ENCODE measurements at regions of chr15 and their contacts with region 1.

Region 1: GRCh38 chr15:26051761-26052675 is 188.9 kb upstream of the ATP10A start:
- DNase-seq: peak in 4 of 5 donors; percentile 11 to 55 (median 32)
- ATAC-seq: peak in 3 of 4 donors; percentile 66 to 89 (median 67)
- H3K4me3 ChIP-seq: no peak overlapping the region
- H3K27ac ChIP-seq: no peak overlapping the region
- H3K4me1 ChIP-seq: no peaks in the 10 kb centered on the region
- H3K27me3 ChIP-seq: peaks cover 0 to 3% (median 0%) of the 10 kb centered on the region in 9 donors
- CTCF ChIP-seq: no peak
- POLR2A ChIP-seq: no peak

Region 2: GRCh38 chr15:25989327-25989726 is 62.7 kb before region 1 on chr15:
- intact Hi-C with region 1: loop called in 1 of 10 experiments (anchors 10 kb)
- DNase-seq: no peak
- ATAC-seq: no peak
- H3K4me3 ChIP-seq: no peak overlapping the region
- H3K27ac ChIP-seq: no peak overlapping the region
- H3K4me1 ChIP-seq: no peaks in the 10 kb centered on the region
- H3K27me3 ChIP-seq: peaks cover 0 to 4% (median 0%) of the 10 kb centered on the region in 9 donors
- CTCF ChIP-seq: no peak
- POLR2A ChIP-seq: no peak

Region 3: DNA sequence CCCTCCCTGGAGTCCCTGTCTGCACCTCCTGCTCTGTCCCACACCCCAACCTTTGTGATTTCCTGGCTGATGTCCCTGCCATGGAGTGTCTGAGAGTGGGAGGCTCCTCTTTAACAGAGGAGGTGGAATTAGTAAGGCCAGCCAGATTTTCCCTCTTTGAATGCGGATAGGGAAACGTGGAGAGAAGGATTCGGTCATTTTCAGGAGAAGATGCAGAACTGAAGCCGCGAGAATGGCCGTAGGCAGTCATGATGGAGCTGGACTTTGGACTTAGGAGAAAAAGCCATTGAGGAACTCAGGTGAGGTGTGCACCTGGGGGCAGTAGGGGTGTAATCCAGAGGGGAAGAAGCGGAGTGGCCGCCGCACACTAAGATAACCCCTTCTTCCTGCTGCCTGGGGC is 50.8 kb before region 1 on chr15:
- intact Hi-C with region 1: loop called in 1 of 10 experiments (anchors 10 kb)
- DNase-seq: no peak
- ATAC-seq: no peak
- H3K4me3 ChIP-seq: no peak overlapping the region
- H3K27ac ChIP-seq: no peak overlapping the region
- H3K4me1 ChIP-seq: no peaks in the 10 kb centered on the region
- H3K27me3 ChIP-seq: no peaks in the 10 kb centered on the region
- CTCF ChIP-seq: no peak
- POLR2A ChIP-seq: no peak

Region 4: DNA sequence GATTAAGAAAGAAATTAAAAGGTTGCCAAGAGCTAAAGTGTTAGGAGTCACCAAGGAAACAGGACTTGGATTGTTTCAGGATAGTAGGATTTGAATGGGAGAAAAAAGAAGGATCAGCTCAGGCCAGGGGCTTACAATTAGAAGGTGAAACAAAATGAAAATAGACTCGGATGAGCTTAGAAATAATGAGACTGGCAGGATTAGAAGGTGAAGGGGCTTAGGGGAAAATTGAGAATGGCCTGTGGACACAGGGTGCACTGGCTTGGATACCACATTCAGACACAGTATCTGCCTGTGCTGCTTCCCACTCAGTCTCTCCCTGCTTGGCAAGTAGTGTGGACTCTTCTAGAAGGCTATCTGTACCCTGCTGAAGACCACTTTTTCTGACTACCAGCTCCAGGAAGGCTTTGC is 17.2 kb after region 1 on chr15:
- intact Hi-C with region 1: loop called in 1 of 10 experiments (anchors 2 kb)
- DNase-seq: no peak
- ATAC-seq: no peak
- H3K4me3 ChIP-seq: no peak overlapping the region
- H3K27ac ChIP-seq: no peak overlapping the region
- H3K4me1 ChIP-seq: no peaks in the 10 kb centered on the region
- H3K27me3 ChIP-seq: peaks cover 0 to 20% (median 0%) of the 10 kb centered on the region in 9 donors
- CTCF ChIP-seq: no peak
- POLR2A ChIP-seq: no peak